Stomach (tissue), 19 donors: ENCODE measurements at regions of chrX and their contacts with region 1.

Region 1: GRCh38 chrX:138745196-138745595 is 33.7 kb upstream of the FGF13 start:
- DNase-seq: peak in 1 of 2 donors; percentile 83
- H3K4me3 ChIP-seq: no peak overlapping the region
- H3K27ac ChIP-seq: no peak overlapping the region
- H3K4me1 ChIP-seq: no peaks in the 10 kb centered on the region
- H3K27me3 ChIP-seq: no peaks in the 10 kb centered on the region
- CTCF ChIP-seq: peak in 4 of 7 experiments; percentile 56 to 76 (median 68)
- EP300 ChIP-seq: no peak
- POLR2A ChIP-seq: no peak

Region 2: GRCh38 chrX:138128027-138128671 is 617.0 kb before region 1 on chrX:
- intact Hi-C with region 1: loop called (anchors 10 kb)
- DNase-seq: peak in 1 of 2 donors; percentile 54
- H3K4me3 ChIP-seq: no peak overlapping the region
- H3K27ac ChIP-seq: no peak overlapping the region
- H3K4me1 ChIP-seq: no peaks in the 10 kb centered on the region
- H3K27me3 ChIP-seq: peaks cover 0 to 14% (median 0%) of the 10 kb centered on the region in 3 donors
- CTCF ChIP-seq: peak in 4 of 7 experiments; percentile 14 to 57 (median 34)
- EP300 ChIP-seq: no peak
- POLR2A ChIP-seq: no peak

Region 3: DNA sequence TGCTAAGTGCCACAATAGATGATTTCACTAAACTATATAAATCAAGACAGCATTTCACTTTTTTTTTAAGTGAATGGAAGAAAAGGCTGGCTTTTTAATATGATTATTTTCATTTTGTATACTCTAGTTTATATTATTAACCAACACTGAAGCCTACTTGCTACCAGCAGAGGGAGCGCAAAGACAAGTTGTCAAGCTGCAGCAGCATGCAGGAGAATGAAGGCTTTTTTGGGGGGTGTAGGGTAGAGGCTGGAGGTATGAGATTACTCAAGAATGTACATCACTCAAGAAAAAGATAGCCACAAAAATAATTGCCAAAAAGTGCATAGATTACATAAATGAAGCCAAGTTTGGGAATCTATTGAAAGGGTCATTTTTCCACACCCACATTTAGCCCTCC is 553.2 kb before region 1 on chrX:
- intact Hi-C with region 1: loop called (anchors 10 kb)
- DNase-seq: peak in 1 of 2 donors; percentile 53
- H3K4me3 ChIP-seq: no peak overlapping the region
- H3K27ac ChIP-seq: no peak overlapping the region
- H3K4me1 ChIP-seq: no peaks in the 10 kb centered on the region
- H3K27me3 ChIP-seq: no peaks in the 10 kb centered on the region
- CTCF ChIP-seq: peak in 4 of 7 experiments; percentile 9 to 28 (median 16)
- EP300 ChIP-seq: no peak
- POLR2A ChIP-seq: no peak